CD8-positive, alpha-beta T cell (primary cell): ENCODE measurements at regions of chr1 and their contacts with region 1.

Region 1: GRCh38 chr1:85276215-85276977 is at the start of gene BCL10:
- DNase-seq: peak; percentile 95 to 99 (median 98)
- ATAC-seq: peak; percentile 94
- H3K4me3 ChIP-seq: peak within 1 kb of the TSS; percentile 72 to 80
- H3K4me3 Mint-ChIP-seq: peak within 1 kb of the TSS; percentile 86
- H3K27ac ChIP-seq: peak within 1 kb of the TSS; percentile 92 to 95
- H3K27ac Mint-ChIP-seq: peak within 1 kb of the TSS; percentile 94
- H3K4me1 ChIP-seq: peaks cover 35% of the 10 kb centered on the region
- H3K4me1 Mint-ChIP-seq: peaks cover 48% of the 10 kb centered on the region
- H3K27me3 ChIP-seq: no peaks in the 10 kb centered on the region
- H3K27me3 Mint-ChIP-seq: no peaks in the 10 kb centered on the region
- CTCF ChIP-seq: no peak
- total RNA-seq, gene BCL10: 48.2 to 51.7 TPM

Region 2: DNA sequence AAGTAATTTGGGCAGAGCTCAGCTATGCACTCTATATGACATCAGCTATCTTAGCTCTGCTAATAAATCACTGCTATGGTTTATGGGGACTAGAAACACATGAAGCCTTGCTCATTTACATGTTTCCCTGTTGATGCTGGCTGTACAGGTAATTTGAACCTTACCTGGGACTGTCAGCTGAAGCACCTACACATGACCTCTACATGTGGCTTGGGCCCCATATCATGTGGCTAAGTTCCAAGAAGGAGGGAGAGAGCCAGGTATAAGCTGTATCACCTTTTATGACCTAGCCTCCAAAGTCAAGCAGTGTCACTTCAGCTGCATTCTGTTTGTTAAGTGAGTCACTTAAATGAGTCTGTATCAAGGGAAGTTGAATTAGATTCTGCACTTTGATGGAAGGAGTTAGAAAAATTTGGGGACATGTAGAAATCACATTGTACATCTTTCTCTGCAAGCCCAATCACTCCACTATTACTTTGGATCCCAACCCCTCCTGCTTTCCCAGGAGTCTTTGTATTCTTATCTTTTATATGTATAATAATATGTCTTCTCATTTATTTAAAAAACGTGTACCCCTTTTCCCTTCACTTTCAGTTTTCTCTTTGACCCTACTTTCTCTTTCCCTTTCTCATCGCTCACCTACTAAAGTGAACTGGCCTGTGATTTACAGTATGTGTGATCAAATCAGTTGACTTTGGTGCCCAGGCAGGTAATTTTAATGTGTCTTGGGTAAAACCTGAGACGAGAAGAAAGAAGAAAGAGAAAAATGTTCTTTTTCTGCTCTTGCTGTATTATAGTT is 1185.8 kb before region 1 on chr1:
- CTCF ChIA-PET with region 1: no interaction called
- POLR2A ChIA-PET with region 1: no interaction called
- intact Hi-C with region 1: loop called in 1 of 2 experiments (anchors 10 kb)
- DNase-seq: peak in 5 of 9 experiments; percentile 4 to 72 (median 46)
- ATAC-seq: peak; percentile 80
- H3K4me3 ChIP-seq: peak overlapping the region; percentile 25 to 40
- H3K4me3 Mint-ChIP-seq: peak overlapping the region; percentile 81
- H3K27ac ChIP-seq: peak overlapping the region; percentile 49 to 73
- H3K27ac Mint-ChIP-seq: peak overlapping the region; percentile 89
- H3K4me1 ChIP-seq: peaks cover 19% of the 10 kb centered on the region
- H3K4me1 Mint-ChIP-seq: peaks cover 31% of the 10 kb centered on the region
- H3K27me3 ChIP-seq: no peaks in the 10 kb centered on the region
- H3K27me3 Mint-ChIP-seq: no peaks in the 10 kb centered on the region
- CTCF ChIP-seq: no peak

Region 3: DNA sequence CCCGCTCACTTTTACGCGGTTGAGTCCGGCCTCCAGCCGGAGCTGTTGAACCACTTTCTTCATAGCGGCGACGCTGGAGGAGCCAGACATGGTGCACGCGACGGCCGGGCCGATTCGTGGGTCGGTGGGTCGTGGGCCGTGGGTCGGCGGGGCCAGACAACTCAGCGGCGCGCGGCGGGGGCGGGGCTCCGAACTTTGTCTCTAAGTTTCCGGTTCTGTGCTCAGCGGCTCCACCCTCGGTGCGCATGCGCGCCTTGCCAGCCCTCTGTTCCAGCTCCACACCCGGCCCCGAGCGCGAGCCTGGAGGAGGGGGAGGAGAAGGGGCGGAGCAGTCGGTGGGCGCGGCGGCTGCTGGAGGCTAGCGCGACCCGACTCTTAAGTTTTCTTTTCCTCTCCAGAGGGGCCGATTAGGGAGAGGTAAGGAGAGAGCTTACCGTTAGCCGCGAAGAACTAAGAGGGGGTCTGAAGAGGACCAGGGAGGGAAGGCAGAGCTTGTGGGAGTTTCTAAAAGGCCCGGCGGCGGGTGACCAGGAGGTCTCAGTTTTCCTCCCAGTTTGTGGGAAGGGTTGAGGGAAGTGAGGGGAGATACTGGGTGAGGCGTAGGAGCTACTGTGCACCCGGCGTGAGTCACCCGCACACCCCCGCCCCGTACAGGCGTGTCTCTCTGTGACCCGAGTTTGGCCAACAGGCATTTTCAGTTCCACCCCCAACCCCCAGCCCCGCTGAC is 770.2 kb before region 1 on chr1 and contains the starts of genes GNG5 and SPATA1:
- CTCF ChIA-PET with region 1: no interaction called
- POLR2A ChIA-PET with region 1: interaction called, 5 read pairs
- intact Hi-C with region 1: loop called in 1 of 2 experiments (anchors 5 kb)
- DNase-seq: peak; percentile 91 to 98 (median 98)
- ATAC-seq: peak; percentile 89
- H3K4me3 ChIP-seq: peak within 1 kb of the TSS; percentile 87 to 95
- H3K4me3 Mint-ChIP-seq: peak within 1 kb of the TSS; percentile 94
- H3K27ac ChIP-seq: peak within 1 kb of the TSS; percentile 75 to 88
- H3K27ac Mint-ChIP-seq: peak within 1 kb of the TSS; percentile 96
- H3K4me1 ChIP-seq: peaks cover 40% of the 10 kb centered on the region
- H3K4me1 Mint-ChIP-seq: peaks cover 45% of the 10 kb centered on the region
- H3K27me3 ChIP-seq: no peaks in the 10 kb centered on the region
- H3K27me3 Mint-ChIP-seq: no peaks in the 10 kb centered on the region
- CTCF ChIP-seq: no peak
- total RNA-seq, gene GNG5: 19.5 TPM
- total RNA-seq, gene SPATA1: 0.52 to 0.94 TPM

Region 4: DNA sequence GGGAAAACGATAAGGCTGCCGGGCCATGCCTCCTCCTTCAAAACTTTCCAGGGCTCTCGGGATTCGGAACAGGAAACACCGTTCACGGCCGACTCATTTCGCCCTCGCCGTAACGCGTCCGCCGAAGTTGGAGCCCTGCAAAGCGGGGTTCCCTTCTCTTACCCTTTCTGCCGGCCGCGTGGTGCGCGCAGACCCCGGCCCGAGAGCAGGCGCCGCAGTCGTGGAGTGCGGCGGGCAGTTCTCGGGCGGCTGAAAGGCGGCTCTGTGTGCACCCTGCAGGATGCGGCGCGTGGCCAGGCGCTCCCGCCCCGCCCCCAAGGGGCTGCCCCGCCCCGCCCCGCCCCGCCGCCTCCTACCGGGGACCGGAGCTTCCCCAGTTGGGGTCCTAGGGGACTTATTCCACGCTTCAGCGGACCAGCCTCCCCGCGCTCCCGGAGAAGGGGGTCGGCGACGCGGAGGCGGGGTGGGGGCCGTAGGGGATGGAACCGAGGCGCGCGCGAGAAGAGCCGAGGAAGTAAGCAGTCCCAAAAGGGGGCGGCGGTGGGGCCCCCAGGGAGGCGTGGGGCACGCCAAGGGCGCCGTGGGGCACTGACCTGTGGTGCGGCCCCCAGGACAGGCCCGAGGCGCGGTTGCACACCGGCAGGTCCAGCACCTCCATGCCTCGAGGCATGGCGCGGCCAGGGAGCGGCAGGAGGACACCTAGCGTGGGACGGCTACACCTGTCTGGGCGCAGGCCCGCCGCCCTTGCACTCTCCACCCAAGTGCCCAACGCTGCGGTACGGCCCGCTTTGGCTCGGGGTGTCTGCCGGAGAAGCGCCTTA is 279.3 kb before region 1 on chr1 and contains the start of gene MCOLN2:
- CTCF ChIA-PET with region 1: interaction called, 3 read pairs
- POLR2A ChIA-PET with region 1: no interaction called
- intact Hi-C with region 1: loop called in 1 of 2 experiments (anchors 5 kb)
- DNase-seq: peak; percentile 16 to 77 (median 51)
- ATAC-seq: peak; percentile 69
- H3K4me3 ChIP-seq: peak within 1 kb of the TSS; percentile 66 to 84
- H3K4me3 Mint-ChIP-seq: peak within 1 kb of the TSS; percentile 84
- H3K27ac ChIP-seq: peak within 1 kb of the TSS; percentile 28 to 81
- H3K27ac Mint-ChIP-seq: peak within 1 kb of the TSS; percentile 57
- H3K4me1 ChIP-seq: peaks cover 20% of the 10 kb centered on the region
- H3K4me1 Mint-ChIP-seq: peaks cover 34% of the 10 kb centered on the region
- H3K27me3 ChIP-seq: no peaks in the 10 kb centered on the region
- H3K27me3 Mint-ChIP-seq: peaks cover 23% of the 10 kb centered on the region
- CTCF ChIP-seq: no peak
- total RNA-seq, gene MCOLN2: 12.7 to 23.1 TPM

Region 5: DNA sequence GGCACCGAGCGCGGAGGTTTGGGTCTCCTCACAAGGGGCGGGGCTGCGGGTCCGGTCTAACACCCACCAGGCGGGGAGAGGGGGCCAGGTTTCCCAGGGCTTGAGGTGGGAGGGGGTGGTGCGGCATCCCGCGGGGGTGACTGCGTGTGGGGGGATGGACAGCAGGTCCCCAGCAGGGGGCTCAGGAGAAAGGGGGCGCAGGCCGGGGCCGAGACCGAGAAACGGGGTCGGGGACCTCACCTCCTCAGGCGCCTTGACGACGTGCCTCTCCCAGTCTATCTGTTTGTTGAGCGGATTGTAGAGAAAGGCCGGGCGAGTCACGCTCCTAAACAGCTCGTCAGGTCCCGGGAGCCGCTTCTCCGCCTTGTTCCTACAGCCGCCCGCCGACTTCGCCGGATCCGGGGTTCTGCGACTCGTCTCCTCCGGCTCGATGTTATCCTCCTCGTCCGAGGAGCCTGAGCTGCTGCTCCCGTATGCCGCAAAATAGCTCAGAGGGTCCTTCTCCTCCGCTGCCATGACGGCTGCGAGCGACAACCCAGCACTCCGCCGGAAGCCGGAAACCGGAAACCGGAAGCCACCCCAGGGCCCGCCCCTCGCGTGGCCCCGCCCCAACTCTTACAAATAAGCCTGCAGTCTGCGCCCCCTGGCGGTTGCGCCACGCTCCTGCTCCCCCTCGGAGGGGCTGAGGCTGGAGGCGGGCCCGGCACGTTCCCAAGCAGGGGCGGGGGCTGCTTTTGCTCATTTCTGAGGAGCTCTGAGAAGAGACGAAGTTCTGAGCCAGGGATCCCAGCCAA is 17.1 kb before region 1 on chr1 and contains the start of gene C1orf52:
- CTCF ChIA-PET with region 1: interaction called, 41 read pairs
- POLR2A ChIA-PET with region 1: interaction called, 35 read pairs
- intact Hi-C with region 1: loop called (anchors 1 kb)
- DNase-seq: peak; percentile 86 to 99 (median 98)
- ATAC-seq: peak; percentile 96
- H3K4me3 ChIP-seq: peak within 1 kb of the TSS; percentile 65 to 93
- H3K4me3 Mint-ChIP-seq: peak within 1 kb of the TSS; percentile 97
- H3K27ac ChIP-seq: peak within 1 kb of the TSS; percentile 78 to 88
- H3K27ac Mint-ChIP-seq: peak within 1 kb of the TSS; percentile 95
- H3K4me1 ChIP-seq: peaks cover 24% of the 10 kb centered on the region
- H3K4me1 Mint-ChIP-seq: peaks cover 36% of the 10 kb centered on the region
- H3K27me3 ChIP-seq: no peaks in the 10 kb centered on the region
- H3K27me3 Mint-ChIP-seq: no peaks in the 10 kb centered on the region
- CTCF ChIP-seq: peak; percentile 99
- total RNA-seq, gene C1orf52: 70.7 to 74.4 TPM

Region 6: GRCh38 chr1:85707990-85708828 is 431.8 kb after region 1 on chr1 and contains the start of gene ZNHIT6:
- CTCF ChIA-PET with region 1: interaction called, 4 read pairs
- POLR2A ChIA-PET with region 1: interaction called, 4 read pairs
- intact Hi-C with region 1: loop called (anchors 1 to 5 kb)
- DNase-seq: peak; percentile 72 to 95 (median 84)
- ATAC-seq: peak; percentile 95
- H3K4me3 ChIP-seq: peak within 1 kb of the TSS; percentile 89 to 93
- H3K4me3 Mint-ChIP-seq: no peak within 1 kb of the TSS
- H3K27ac ChIP-seq: peak within 1 kb of the TSS; percentile 67 to 79
- H3K27ac Mint-ChIP-seq: no peak within 1 kb of the TSS
- H3K4me1 ChIP-seq: peaks cover 17% of the 10 kb centered on the region
- H3K4me1 Mint-ChIP-seq: peaks cover 30% of the 10 kb centered on the region
- H3K27me3 ChIP-seq: no peaks in the 10 kb centered on the region
- H3K27me3 Mint-ChIP-seq: no peaks in the 10 kb centered on the region
- CTCF ChIP-seq: no peak
- total RNA-seq, gene ZNHIT6: 14.4 to 15.3 TPM

Region 7: DNA sequence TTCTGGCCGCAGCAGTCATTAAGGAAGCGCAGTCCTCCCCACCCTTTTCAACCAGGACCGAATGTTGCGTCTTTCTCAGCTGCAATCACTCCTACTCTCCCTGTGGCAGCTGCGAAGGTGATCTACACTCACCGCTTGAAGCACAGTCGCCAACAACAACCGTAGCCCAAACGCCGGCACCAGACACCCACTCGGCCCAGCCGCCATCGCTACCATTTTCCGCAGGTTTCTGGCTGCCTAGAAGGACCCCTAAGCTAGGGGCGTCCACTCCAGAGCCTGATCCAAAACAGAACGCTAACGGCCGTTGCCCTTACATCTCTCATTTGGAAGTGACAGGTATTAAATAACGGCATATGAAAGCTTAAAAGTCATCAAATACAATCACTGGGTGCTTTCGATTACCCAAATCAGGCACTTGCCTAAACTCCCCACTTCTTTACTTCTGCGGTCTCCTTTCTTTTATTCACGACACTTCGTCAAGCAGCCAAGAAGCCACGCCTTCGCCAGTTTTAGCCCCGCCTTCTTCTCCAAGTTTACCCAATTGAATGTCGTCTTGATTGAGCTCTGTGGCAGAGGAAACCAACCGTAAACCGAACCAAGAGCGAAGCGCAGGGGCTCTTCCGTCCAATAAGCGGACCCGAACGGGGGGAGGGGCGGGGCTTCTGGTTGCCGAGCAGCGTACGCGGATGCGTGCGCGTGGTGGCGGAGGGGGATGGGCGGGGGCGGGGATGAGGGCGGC is 1637.7 kb after region 1 on chr1 and contains the start of gene SELENOF:
- CTCF ChIA-PET with region 1: no interaction called
- POLR2A ChIA-PET with region 1: interaction called, 3 read pairs
- intact Hi-C with region 1: loop called in 1 of 2 experiments (anchors 2 kb)
- DNase-seq: peak; percentile 97 to 100 (median 99)
- ATAC-seq: peak; percentile 85
- H3K4me3 ChIP-seq: peak within 1 kb of the TSS; percentile 91 to 99
- H3K4me3 Mint-ChIP-seq: no peak within 1 kb of the TSS
- H3K27ac ChIP-seq: peak within 1 kb of the TSS; percentile 76 to 99
- H3K27ac Mint-ChIP-seq: no peak within 1 kb of the TSS
- H3K4me1 ChIP-seq: peaks cover 35% of the 10 kb centered on the region
- H3K4me1 Mint-ChIP-seq: peaks cover 50% of the 10 kb centered on the region
- H3K27me3 ChIP-seq: no peaks in the 10 kb centered on the region
- H3K27me3 Mint-ChIP-seq: no peaks in the 10 kb centered on the region
- CTCF ChIP-seq: no peak
- total RNA-seq, gene SELENOF: 74.5 to 78.6 TPM